BJ (cell line): ENCODE measurements at regions of chr1 and their contacts with region 1.

Region 1: DNA sequence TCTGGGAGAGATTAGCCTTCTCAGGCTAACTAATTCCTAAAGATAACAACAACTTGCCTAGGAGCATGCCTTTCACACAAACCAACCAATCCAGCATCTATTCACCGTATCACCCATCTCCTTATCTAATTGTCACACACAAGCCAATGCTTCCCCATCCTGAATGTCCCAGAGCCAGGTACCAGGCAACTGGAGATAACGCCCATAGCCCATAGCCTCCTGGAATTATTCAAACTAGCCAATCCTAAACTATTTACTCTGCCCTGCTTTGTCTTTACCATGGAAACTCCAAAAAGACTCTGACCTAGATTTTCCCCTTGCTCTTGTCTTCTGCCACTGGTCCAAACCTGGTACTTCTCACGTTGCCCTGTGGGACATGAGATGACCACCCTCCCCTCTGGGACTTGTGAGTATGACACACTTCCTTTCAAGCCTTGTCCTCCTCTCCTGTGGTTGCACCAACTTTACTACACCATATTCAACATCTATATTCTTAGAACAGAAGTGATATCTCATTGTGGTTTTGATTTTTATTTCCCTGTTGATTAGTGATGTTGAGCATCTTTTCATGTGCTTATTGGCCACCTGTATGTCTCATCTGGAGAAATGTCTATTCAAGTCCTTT is 8.8 kb upstream of the ATG4C start:
- DNase-seq: no peak
- H3K4me3 ChIP-seq: no peak overlapping the region
- H3K27me3 ChIP-seq: peaks cover 5% of the 10 kb centered on the region
- CTCF ChIP-seq: no peak

Region 2: DNA sequence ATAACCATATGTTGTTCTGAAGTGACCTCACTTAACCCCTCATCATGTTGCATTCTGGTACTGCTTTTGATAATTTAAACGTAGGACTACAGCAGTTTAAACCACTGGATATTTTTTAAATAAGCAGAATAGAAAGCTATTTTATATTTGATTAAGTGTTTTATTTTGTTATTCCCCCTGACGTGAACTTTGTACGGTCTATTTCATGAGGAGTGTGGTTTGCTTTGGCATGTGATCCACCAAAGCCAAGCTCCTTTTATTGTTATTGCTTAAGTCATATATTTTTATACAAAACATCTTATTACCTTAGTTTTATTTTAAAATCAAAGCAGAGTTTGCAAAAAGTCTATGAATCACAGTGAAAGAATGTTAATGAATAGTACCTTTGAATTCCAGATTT is 681.8 kb before region 1 on chr1:
- CTCF ChIA-PET with region 1: no interaction called
- POLR2A ChIA-PET with region 1: interaction called, 12 read pairs
- DNase-seq: no peak
- H3K4me3 ChIP-seq: no peak overlapping the region
- H3K27me3 ChIP-seq: no peaks in the 10 kb centered on the region
- CTCF ChIP-seq: no peak

Region 3: GRCh38 chr1:62856960-62857359 is 81.9 kb after region 1 on chr1:
- CTCF ChIA-PET with region 1: no interaction called
- POLR2A ChIA-PET with region 1: no interaction called
- DNase-seq: no peak
- H3K4me3 ChIP-seq: no peak overlapping the region
- H3K27me3 ChIP-seq: no peaks in the 10 kb centered on the region
- CTCF ChIP-seq: no peak